H1 (cell line): ENCODE measurements at regions of chr18 and their contacts with region 1.

Region 1: GRCh38 chr18:24397694-24398365 is at the start of gene OSBPL1A:
- DNase-seq: peak; percentile 89 to 94
- H3K4me3 ChIP-seq: peak within 1 kb of the TSS; percentile 64 to 94 (median 92)
- H3K27ac ChIP-seq: peak within 1 kb of the TSS; percentile 88
- H3K4me1 ChIP-seq: peaks cover 4 to 9% (median 6%) of the 10 kb centered on the region in 4 experiments; a peak in 6 of 7 replicates
- H3K27me3 ChIP-seq: no peaks in the 10 kb centered on the region; a peak in 1 of 7 replicates
- CTCF ChIP-seq: no peak
- EP300 ChIP-seq: peak in 1 of 2 experiments; percentile 61; a peak in 1 of 3 replicates
- POLR2A ChIP-seq: peak; percentile 57 to 91
- RAD21 ChIP-seq: no peak
- total RNA-seq, gene OSBPL1A: 74.9 and 77.1 TPM in 2 replicates

Region 2: DNA sequence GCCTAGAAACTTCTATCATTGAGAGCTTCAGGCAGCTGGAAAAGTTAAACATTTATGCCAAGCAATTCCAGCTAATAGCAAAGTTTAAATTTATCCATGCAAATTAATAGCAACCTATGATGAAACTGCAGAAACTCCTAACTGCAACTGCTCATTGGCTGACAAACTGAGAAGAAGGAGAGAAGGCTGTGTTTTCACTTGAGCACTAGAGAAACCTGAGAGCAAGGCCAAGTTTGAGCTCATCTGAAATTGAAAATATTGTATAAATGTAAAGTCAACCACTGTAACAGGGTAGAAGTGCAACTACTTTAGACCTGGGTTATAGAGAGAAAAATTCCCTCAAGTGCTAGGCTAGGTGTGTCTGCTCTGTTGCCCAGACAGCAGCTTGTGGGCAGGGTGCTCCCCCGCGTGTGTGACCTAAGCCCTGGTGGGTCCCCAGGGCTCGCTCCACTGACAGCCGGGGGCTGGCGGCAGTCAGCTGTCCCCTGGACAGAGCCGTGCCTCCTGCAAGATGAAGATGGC is 208.8 kb before region 1 on chr18:
- CTCF ChIA-PET with region 1: no interaction called
- POLR2A ChIA-PET with region 1: no interaction called
- DNase-seq: no peak
- H3K4me3 ChIP-seq: no peak overlapping the region
- H3K27ac ChIP-seq: peak overlapping the region; percentile 24; the same call in 1 of the 2 replicates
- H3K4me1 ChIP-seq: 0 out of 7 replicates have a peak, but pooled peaks cover 0 to 2% (median under 1%) of the 10 kb centered on the region in 4 experiments
- H3K27me3 ChIP-seq: no peaks in the 10 kb centered on the region
- CTCF ChIP-seq: no peak
- EP300 ChIP-seq: no peak
- POLR2A ChIP-seq: no peak
- RAD21 ChIP-seq: no peak

Region 3: GRCh38 chr18:24362758-24363157 is 35.1 kb before region 1 on chr18:
- CTCF ChIA-PET with region 1: interaction called, 18 read pairs
- POLR2A ChIA-PET with region 1: interaction called, 3 read pairs
- DNase-seq: peak in 1 of 2 experiments; percentile 34
- H3K4me3 ChIP-seq: no peak overlapping the region
- H3K27ac ChIP-seq: no peak overlapping the region
- H3K4me1 ChIP-seq: 0 out of 7 replicates have a peak, but pooled peaks cover 0 to 2% (median 0%) of the 10 kb centered on the region in 4 experiments
- H3K27me3 ChIP-seq: no peaks in the 10 kb centered on the region
- CTCF ChIP-seq: no peak
- EP300 ChIP-seq: no peak
- POLR2A ChIP-seq: no peak
- RAD21 ChIP-seq: no peak

Region 4: DNA sequence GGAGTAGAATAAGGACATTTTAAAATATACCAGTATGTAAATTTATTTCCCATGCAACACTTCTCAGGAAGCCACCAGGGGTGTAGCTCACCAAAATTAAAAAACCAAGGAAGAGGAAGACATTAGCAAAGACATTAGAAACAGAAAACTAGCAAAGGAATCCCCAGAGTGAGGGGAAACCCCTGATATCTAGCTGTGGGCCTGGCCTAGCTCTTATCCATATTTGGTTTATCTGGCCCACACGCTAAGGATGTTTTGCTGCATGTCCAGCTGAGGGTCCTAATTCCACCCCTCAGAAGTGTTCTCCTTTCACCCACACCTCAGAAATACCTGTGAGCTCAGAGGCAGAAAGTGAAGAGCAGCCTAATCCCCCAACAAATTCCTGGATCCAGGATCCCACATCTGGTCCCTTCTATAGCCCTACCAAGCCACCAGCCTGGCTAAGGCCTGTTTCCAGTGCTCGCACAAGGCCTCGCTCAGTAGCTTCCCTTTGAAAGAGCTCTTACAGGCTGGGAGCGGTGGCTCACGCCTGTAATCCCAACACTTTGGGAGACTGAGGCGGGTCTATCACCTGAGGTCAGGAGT is 17.6 kb before region 1 on chr18:
- CTCF ChIA-PET with region 1: interaction called, 4 read pairs
- POLR2A ChIA-PET with region 1: interaction called, 20 read pairs
- DNase-seq: no peak
- H3K4me3 ChIP-seq: no peak overlapping the region
- H3K27ac ChIP-seq: peak overlapping the region; percentile 76; the same call in 1 of the 2 replicates
- H3K4me1 ChIP-seq: peaks cover 4 to 13% (median 11%) of the 10 kb centered on the region in 4 experiments
- H3K27me3 ChIP-seq: no peaks in the 10 kb centered on the region
- CTCF ChIP-seq: no peak
- EP300 ChIP-seq: no peak
- POLR2A ChIP-seq: 0 out of 3 replicates have a peak, but pooled peaks of 1 of the 2 experiments have one; percentile 30
- RAD21 ChIP-seq: no peak

Region 5: DNA sequence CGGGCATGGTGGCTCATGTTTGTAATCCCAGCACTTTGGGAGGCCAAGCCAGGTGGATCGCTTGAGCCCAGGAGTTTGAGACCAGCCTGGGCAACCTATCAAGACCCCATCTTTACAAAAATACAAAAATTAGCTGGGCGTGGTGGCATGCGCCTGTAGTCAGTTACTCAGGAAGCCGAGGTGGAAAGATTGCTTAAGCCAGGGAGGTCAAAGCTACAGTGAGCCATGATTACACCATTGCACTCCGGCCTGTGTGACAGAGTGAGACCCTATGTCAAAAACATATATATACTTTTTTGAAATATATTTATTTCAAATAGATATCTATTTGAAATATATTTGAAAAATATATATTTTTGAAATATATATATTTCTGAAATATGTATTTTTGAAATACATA is 11.1 kb before region 1 on chr18:
- CTCF ChIA-PET with region 1: interaction called, 4 read pairs
- POLR2A ChIA-PET with region 1: interaction called, 17 read pairs
- DNase-seq: no peak
- H3K4me3 ChIP-seq: no peak overlapping the region
- H3K27ac ChIP-seq: no peak overlapping the region
- H3K4me1 ChIP-seq: no peaks in the 10 kb centered on the region
- H3K27me3 ChIP-seq: no peaks in the 10 kb centered on the region
- CTCF ChIP-seq: no peak
- EP300 ChIP-seq: no peak
- POLR2A ChIP-seq: no peak
- RAD21 ChIP-seq: no peak

Region 6: DNA sequence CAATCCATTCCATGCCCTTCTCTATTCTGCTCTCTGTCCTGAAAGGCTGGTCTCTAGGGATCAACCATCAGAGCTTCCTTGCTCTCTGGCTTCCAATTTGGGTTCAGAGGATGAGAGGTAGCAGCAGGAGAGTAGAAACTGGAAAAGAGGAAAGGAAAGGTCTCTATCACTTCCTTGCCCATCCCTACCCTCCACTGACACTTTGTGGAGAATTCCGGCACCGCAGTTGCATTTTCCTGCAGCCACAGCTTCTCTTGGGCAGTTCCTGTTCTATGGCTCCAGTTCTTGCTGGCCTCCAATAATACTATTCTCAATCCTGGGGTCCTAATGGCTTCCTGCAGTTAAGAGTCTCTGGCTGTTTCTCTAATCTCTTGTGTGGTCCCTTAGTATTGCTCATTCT is 15.3 kb after region 1 on chr18:
- CTCF ChIA-PET with region 1: interaction called, 11 read pairs
- POLR2A ChIA-PET with region 1: interaction called, 8 read pairs
- DNase-seq: peak in 1 of 2 experiments; percentile 70
- H3K4me3 ChIP-seq: no peak overlapping the region
- H3K27ac ChIP-seq: no peak overlapping the region
- H3K4me1 ChIP-seq: peaks cover 0 to 4% (median 0%) of the 10 kb centered on the region in 4 experiments; a peak in 1 of 7 replicates
- H3K27me3 ChIP-seq: no peaks in the 10 kb centered on the region
- CTCF ChIP-seq: peak; percentile 62 to 74 (median 71)
- EP300 ChIP-seq: no peak
- POLR2A ChIP-seq: no peak
- RAD21 ChIP-seq: peak; percentile 88 to 89

Region 7: GRCh38 chr18:24426398-24427294 is 28.8 kb after region 1 on chr18 and contains the start of gene IMPACT:
- CTCF ChIA-PET with region 1: interaction called, 6 read pairs
- POLR2A ChIA-PET with region 1: interaction called, 18 read pairs
- DNase-seq: peak; percentile 81 to 95
- H3K4me3 ChIP-seq: peak within 1 kb of the TSS; percentile 83 to 94 (median 84)
- H3K27ac ChIP-seq: peak within 1 kb of the TSS; percentile 90
- H3K4me1 ChIP-seq: peaks cover 0 to 6% (median 1%) of the 10 kb centered on the region in 4 experiments; a peak in 2 of 7 replicates
- H3K27me3 ChIP-seq: no peaks in the 10 kb centered on the region
- CTCF ChIP-seq: no peak
- EP300 ChIP-seq: peak in 1 of 2 experiments; percentile 84; a peak in 1 of 3 replicates
- POLR2A ChIP-seq: peak; percentile 73 to 98
- RAD21 ChIP-seq: no peak
- total RNA-seq, gene IMPACT: 44.6 and 50.6 TPM in 2 replicates

Region 8: DNA sequence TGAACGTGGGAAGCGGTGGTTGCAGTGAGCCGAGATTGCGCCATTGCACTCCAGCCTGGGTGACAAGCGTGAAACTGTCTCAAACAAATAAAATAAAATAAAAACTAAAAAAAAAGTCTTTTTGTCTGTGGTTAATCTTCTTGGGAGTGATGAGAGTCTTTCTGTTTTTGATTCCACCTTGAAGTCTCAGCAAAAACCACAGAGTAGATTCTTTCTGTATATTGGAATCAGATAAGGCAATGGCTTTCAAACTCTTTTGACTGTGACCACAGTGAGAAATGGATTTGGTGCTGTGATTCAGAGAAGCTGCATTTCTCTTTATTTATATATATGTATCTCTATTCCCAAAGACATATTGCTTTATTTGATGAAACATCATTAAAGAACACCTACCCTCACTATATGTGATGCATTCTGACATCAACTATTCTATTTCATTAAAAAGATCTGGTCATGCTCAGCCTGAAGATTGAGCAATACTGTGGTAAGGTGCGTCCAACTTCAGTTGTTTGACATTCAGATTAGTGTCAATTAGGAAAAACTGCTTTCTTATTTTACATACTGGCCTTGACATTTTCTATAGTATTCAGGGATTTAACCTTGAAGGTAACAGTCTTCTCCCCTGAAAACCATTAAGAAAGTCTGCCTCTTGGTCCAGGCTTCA is 78.2 kb after region 1 on chr18:
- CTCF ChIA-PET with region 1: no interaction called
- POLR2A ChIA-PET with region 1: no interaction called
- DNase-seq: no peak
- H3K4me3 ChIP-seq: no peak overlapping the region
- H3K27ac ChIP-seq: no peak overlapping the region
- H3K4me1 ChIP-seq: no peaks in the 10 kb centered on the region
- H3K27me3 ChIP-seq: no peaks in the 10 kb centered on the region
- CTCF ChIP-seq: no peak
- EP300 ChIP-seq: no peak
- POLR2A ChIP-seq: no peak
- RAD21 ChIP-seq: no peak